ENCODE measurements at regions of chr19 and their contacts with region 1.

Region 1: GRCh38 chr19:19643158-19644053 is at the start of gene GMIP:
- DNase-seq: peak; percentile 77
- H3K4me3 Mint-ChIP-seq: peak within 1 kb of the TSS; percentile 89
- H3K27ac Mint-ChIP-seq: peak within 1 kb of the TSS; percentile 78
- H3K4me1 Mint-ChIP-seq: peaks cover 12% of the 10 kb centered on the region
- H3K27me3 Mint-ChIP-seq: no peaks in the 10 kb centered on the region
- CTCF ChIP-seq: peak; percentile 93
- total RNA-seq, gene GMIP: 9.1 and 10.1 TPM in 2 replicates

Region 2: GRCh38 chr19:19554074-19555023 is 89.1 kb before region 1 on chr19:
- CTCF ChIA-PET with region 1: interaction called, 21 read pairs
- POLR2A ChIA-PET with region 1: no interaction called
- intact Hi-C with region 1: loop called (anchors 5 kb)
- DNase-seq: peak; percentile 66
- H3K4me3 Mint-ChIP-seq: no peak overlapping the region
- H3K27ac Mint-ChIP-seq: no peak overlapping the region
- H3K4me1 Mint-ChIP-seq: no peaks in the 10 kb centered on the region
- H3K27me3 Mint-ChIP-seq: no peaks in the 10 kb centered on the region
- CTCF ChIP-seq: peak; percentile 70

Region 3: GRCh38 chr19:19591133-19591825 is 52.1 kb before region 1 on chr19:
- CTCF ChIA-PET with region 1: interaction called, 5 read pairs
- POLR2A ChIA-PET with region 1: no interaction called
- intact Hi-C with region 1: loop called (anchors 2 kb)
- DNase-seq: peak; percentile 98
- H3K4me3 Mint-ChIP-seq: peak overlapping the region; percentile 19
- H3K27ac Mint-ChIP-seq: peak overlapping the region; percentile 54
- H3K4me1 Mint-ChIP-seq: peaks cover 14% of the 10 kb centered on the region
- H3K27me3 Mint-ChIP-seq: no peaks in the 10 kb centered on the region
- CTCF ChIP-seq: no peak

Region 4: DNA sequence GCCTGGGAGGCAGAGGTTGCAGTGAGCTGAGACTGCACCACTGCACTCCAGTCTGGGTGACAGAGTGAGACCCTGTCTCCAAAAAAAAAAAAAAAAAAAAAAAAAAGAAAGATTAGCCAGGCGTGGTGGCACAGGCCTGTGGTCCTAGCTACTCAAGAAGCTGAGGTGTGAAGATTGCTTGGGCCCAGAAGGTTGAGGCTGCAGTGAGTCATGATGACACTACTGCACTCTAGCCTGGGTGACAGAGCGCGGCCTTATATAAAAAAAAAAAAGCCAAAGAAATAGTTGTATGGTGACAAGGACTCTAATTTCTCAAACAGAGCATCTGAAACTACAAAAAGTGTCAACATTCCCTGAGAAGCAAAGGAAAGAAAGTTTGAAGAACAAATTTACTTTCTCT is 28.3 kb before region 1 on chr19:
- CTCF ChIA-PET with region 1: interaction called, 13 read pairs
- POLR2A ChIA-PET with region 1: no interaction called
- intact Hi-C with region 1: no loop called
- DNase-seq: peak; percentile 48
- H3K4me3 Mint-ChIP-seq: no peak overlapping the region
- H3K27ac Mint-ChIP-seq: no peak overlapping the region
- H3K4me1 Mint-ChIP-seq: peaks cover 8% of the 10 kb centered on the region
- H3K27me3 Mint-ChIP-seq: no peaks in the 10 kb centered on the region
- CTCF ChIP-seq: no peak

Region 5: DNA sequence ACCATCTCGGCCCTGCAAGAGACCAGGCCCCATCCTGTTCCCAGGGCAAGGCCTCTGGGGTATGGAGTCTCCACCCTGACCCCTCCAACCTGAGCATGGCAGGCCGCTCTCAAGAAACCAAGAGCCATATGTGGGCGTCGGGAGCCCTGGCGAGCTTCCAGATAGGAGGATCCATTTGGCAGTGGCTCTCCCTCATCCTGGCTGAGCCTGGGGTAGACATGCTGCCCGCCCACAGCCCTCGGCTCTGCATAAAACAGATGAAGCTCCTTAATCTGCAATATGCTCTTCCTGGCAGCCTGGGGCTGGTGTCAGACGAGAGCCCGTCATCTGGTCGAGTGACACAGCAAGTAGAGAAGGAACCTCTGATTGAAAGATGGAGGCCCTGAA is 14.0 kb after region 1 on chr19:
- CTCF ChIA-PET with region 1: interaction called, 25 read pairs
- POLR2A ChIA-PET with region 1: interaction called, 5 read pairs
- intact Hi-C with region 1: no loop called
- DNase-seq: no peak
- H3K4me3 Mint-ChIP-seq: no peak overlapping the region
- H3K27ac Mint-ChIP-seq: no peak overlapping the region
- H3K4me1 Mint-ChIP-seq: peaks cover 14% of the 10 kb centered on the region
- H3K27me3 Mint-ChIP-seq: no peaks in the 10 kb centered on the region
- CTCF ChIP-seq: no peak

Region 6: GRCh38 chr19:19663256-19664038 is 20.0 kb after region 1 on chr19 and contains the start of gene ATP13A1:
- CTCF ChIA-PET with region 1: interaction called, 19 read pairs
- POLR2A ChIA-PET with region 1: interaction called, 5 read pairs
- intact Hi-C with region 1: no loop called
- DNase-seq: peak; percentile 98
- H3K4me3 Mint-ChIP-seq: peak within 1 kb of the TSS; percentile 79
- H3K27ac Mint-ChIP-seq: peak within 1 kb of the TSS; percentile 96
- H3K4me1 Mint-ChIP-seq: peaks cover 16% of the 10 kb centered on the region
- H3K27me3 Mint-ChIP-seq: no peaks in the 10 kb centered on the region
- CTCF ChIP-seq: no peak
- total RNA-seq, gene ATP13A1: 63.9 and 67.2 TPM in 2 replicates

Region 7: DNA sequence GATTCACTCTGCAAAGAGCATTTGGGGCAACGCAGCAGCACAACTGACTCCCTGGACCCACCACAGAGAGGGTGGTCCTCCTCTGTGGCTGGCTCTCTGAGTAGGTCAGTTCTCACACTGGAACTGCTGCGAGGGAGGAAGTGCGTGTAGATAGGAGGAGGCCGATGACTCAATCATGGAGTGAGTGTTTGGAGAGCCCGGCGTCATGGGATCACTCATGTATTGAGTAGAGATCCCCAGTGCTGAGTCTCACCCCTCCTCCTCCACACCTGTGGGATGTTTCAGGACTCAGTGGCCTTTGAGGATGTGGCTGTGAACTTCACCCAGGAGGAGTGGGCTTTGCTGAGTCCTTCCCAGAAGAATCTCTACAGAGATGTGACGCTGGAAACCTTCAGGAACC is 34.2 kb after region 1 on chr19:
- CTCF ChIA-PET with region 1: no interaction called
- POLR2A ChIA-PET with region 1: no interaction called
- intact Hi-C with region 1: no loop called
- DNase-seq: no peak
- H3K4me3 Mint-ChIP-seq: no peak overlapping the region
- H3K27ac Mint-ChIP-seq: no peak overlapping the region
- H3K4me1 Mint-ChIP-seq: no peaks in the 10 kb centered on the region
- H3K27me3 Mint-ChIP-seq: no peaks in the 10 kb centered on the region
- CTCF ChIP-seq: no peak

Region 8: GRCh38 chr19:19696386-19696785 is 53.0 kb after region 1 on chr19:
- CTCF ChIA-PET with region 1: no interaction called
- POLR2A ChIA-PET with region 1: no interaction called
- intact Hi-C with region 1: no loop called
- DNase-seq: no peak
- H3K4me3 Mint-ChIP-seq: no peak overlapping the region
- H3K27ac Mint-ChIP-seq: no peak overlapping the region
- H3K4me1 Mint-ChIP-seq: no peaks in the 10 kb centered on the region
- H3K27me3 Mint-ChIP-seq: no peaks in the 10 kb centered on the region
- CTCF ChIP-seq: no peak

Region 9: DNA sequence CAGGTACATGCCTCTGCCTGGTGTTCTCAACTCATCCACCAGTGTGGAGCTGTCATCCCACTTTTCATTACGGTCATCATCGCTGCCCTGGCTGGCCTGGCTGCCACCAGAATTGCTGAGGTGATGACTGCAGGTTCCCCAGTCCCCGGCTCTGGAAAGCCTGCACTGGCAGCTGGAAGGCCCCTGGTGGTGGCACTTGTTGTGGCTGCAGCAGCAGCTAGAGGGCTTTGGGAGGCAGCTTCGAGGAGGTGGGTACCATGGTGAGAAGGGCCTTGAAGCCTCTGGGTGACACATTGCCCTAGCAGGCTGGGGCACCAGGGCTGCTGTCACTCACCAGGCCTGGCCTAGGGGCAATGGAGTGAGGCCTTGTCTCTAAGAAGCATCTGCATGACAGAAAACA is 114.8 kb after region 1 on chr19:
- CTCF ChIA-PET with region 1: no interaction called
- POLR2A ChIA-PET with region 1: no interaction called
- intact Hi-C with region 1: no loop called
- DNase-seq: no peak
- H3K4me3 Mint-ChIP-seq: no peak overlapping the region
- H3K27ac Mint-ChIP-seq: no peak overlapping the region
- H3K4me1 Mint-ChIP-seq: no peaks in the 10 kb centered on the region
- H3K27me3 Mint-ChIP-seq: no peaks in the 10 kb centered on the region
- CTCF ChIP-seq: no peak

Region 10: GRCh38 chr19:19805480-19805879 is 162.1 kb after region 1 on chr19:
- CTCF ChIA-PET with region 1: no interaction called
- POLR2A ChIA-PET with region 1: no interaction called
- intact Hi-C with region 1: no loop called
- DNase-seq: no peak
- H3K4me3 Mint-ChIP-seq: no peak overlapping the region
- H3K27ac Mint-ChIP-seq: no peak overlapping the region
- H3K4me1 Mint-ChIP-seq: no peaks in the 10 kb centered on the region
- H3K27me3 Mint-ChIP-seq: no peaks in the 10 kb centered on the region
- CTCF ChIP-seq: no peak

Measured in MCF 10A (cell line).